Endothelial cell of umbilical vein (primary cell): ENCODE measurements at regions of chr3 and their contacts with region 1.

Region 1: GRCh38 chr3:132416807-132417694 is at the start of gene DNAJC13:
- DNase-seq: peak; percentile 96
- H3K4me3 ChIP-seq: peak within 1 kb of the TSS; percentile 87 to 100 (median 89)
- H3K27ac ChIP-seq: peak within 1 kb of the TSS; percentile 59
- H3K4me1 ChIP-seq: peaks cover 20% of the 10 kb centered on the region
- H3K27me3 ChIP-seq: no peaks in the 10 kb centered on the region
- CTCF ChIP-seq: no peak
- POLR2A ChIP-seq: no peak
- total RNA-seq, gene DNAJC13: 64.0 and 71.7 TPM in 2 replicates

Region 2: GRCh38 chr3:132135628-132136333 is 281.3 kb before region 1 on chr3:
- CTCF ChIA-PET with region 1: no interaction called
- POLR2A ChIA-PET with region 1: no interaction called
- dilution Hi-C with region 1: no loop called
- intact Hi-C with region 1: loop called (anchors 10 kb)
- DNase-seq: peak; percentile 75
- H3K4me3 ChIP-seq: no peak overlapping the region
- H3K27ac ChIP-seq: peak overlapping the region; percentile 92
- H3K4me1 ChIP-seq: peaks cover 26% of the 10 kb centered on the region
- H3K27me3 ChIP-seq: peaks cover 0 to 2% of the 10 kb centered on the region in 2 experiments
- CTCF ChIP-seq: no peak
- POLR2A ChIP-seq: no peak

Region 3: DNA sequence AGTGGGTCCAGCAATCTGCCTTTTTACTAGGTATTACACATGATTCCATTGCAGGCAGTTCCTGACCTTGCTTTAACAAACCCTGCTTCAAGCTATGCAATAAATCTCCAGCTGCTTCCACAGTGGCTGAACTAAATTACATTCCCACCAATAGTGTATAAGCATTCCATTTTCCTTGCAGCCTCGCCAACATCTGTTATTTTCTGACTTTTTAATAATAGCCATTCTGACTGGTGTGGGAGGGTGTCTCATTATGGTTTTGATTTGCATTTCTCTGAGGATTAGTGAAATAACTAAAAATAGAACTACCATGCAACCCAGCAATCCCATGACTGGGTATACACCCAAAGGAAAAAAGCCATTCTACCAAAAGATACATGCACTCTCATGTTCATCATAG is 36.1 kb before region 1 on chr3:
- CTCF ChIA-PET with region 1: no interaction called
- POLR2A ChIA-PET with region 1: no interaction called
- dilution Hi-C with region 1: no loop called
- intact Hi-C with region 1: no loop called
- DNase-seq: no peak
- H3K4me3 ChIP-seq: no peak overlapping the region
- H3K27ac ChIP-seq: no peak overlapping the region
- H3K4me1 ChIP-seq: no peaks in the 10 kb centered on the region
- H3K27me3 ChIP-seq: peaks cover 1 to 7% of the 10 kb centered on the region in 2 experiments
- CTCF ChIP-seq: no peak
- POLR2A ChIP-seq: no peak

Region 4: GRCh38 chr3:132432639-132433038 is 15.6 kb after region 1 on chr3:
- CTCF ChIA-PET with region 1: interaction called, 6 read pairs
- POLR2A ChIA-PET with region 1: no interaction called
- dilution Hi-C with region 1: no loop called
- intact Hi-C with region 1: loop called (anchors 1 kb)
- DNase-seq: peak; percentile 82
- H3K4me3 ChIP-seq: no peak overlapping the region
- H3K27ac ChIP-seq: peak overlapping the region; percentile 44
- H3K4me1 ChIP-seq: peaks cover 21% of the 10 kb centered on the region
- H3K27me3 ChIP-seq: no peaks in the 10 kb centered on the region
- CTCF ChIP-seq: no peak
- POLR2A ChIP-seq: no peak

Region 5: DNA sequence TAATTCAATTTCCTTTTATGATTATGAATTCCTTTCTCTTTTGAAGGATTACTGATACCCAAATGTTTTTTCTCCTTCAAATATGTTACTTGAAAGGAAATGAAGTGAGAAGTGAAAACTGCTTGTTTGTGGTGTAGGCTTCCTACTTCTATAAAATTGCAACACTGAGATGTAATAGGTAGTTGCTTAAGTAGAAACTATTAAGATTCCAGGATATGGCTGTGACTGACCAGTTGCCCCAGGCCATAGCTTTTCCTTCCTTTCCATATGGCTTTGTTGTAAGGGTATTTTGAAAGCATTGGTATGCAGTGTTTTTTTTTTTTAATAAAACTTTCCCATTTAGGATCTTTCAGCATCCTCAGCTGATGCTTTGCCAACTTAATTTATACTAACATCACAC is 28.8 kb after region 1 on chr3:
- CTCF ChIA-PET with region 1: interaction called, 3 read pairs
- POLR2A ChIA-PET with region 1: no interaction called
- dilution Hi-C with region 1: no loop called
- intact Hi-C with region 1: loop called (anchors 2 kb)
- DNase-seq: peak; percentile 78
- H3K4me3 ChIP-seq: no peak overlapping the region
- H3K27ac ChIP-seq: no peak overlapping the region
- H3K4me1 ChIP-seq: peaks cover 16% of the 10 kb centered on the region
- H3K27me3 ChIP-seq: no peaks in the 10 kb centered on the region
- CTCF ChIP-seq: no peak
- POLR2A ChIP-seq: no peak

Region 6: GRCh38 chr3:132522353-132522752 is 105.3 kb after region 1 on chr3:
- CTCF ChIA-PET with region 1: no interaction called
- POLR2A ChIA-PET with region 1: no interaction called
- dilution Hi-C with region 1: no loop called
- intact Hi-C with region 1: no loop called
- DNase-seq: no peak
- H3K4me3 ChIP-seq: no peak overlapping the region
- H3K27ac ChIP-seq: no peak overlapping the region
- H3K4me1 ChIP-seq: no peaks in the 10 kb centered on the region
- H3K27me3 ChIP-seq: no peaks in the 10 kb centered on the region
- CTCF ChIP-seq: no peak
- POLR2A ChIP-seq: no peak

Region 7: DNA sequence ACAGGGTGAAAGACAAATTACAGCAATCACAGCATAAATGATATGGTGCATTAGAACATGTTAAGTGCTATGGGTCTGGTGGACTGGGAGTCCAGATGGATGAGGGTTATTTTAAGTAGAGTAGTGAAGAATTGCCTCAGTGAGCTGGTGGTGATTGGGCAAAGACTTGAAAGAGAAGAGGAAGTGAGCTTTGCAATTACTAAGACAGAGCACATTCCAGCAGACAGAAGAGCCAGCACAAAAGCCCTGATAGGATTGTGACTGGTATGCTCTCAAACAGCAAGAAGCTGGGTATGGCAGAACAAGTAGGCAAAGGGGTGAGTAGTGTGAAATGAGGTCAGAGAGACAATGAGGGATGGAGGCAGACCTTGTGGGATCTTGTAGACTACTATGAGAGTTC is 178.0 kb after region 1 on chr3:
- CTCF ChIA-PET with region 1: no interaction called
- POLR2A ChIA-PET with region 1: no interaction called
- dilution Hi-C with region 1: no loop called
- intact Hi-C with region 1: no loop called
- DNase-seq: peak; percentile 65
- H3K4me3 ChIP-seq: no peak overlapping the region
- H3K27ac ChIP-seq: peak overlapping the region; percentile 90
- H3K4me1 ChIP-seq: peaks cover 40% of the 10 kb centered on the region
- H3K27me3 ChIP-seq: no peaks in the 10 kb centered on the region
- CTCF ChIP-seq: no peak
- POLR2A ChIP-seq: no peak

Region 8: GRCh38 chr3:132659365-132660051 is 242.5 kb after region 1 on chr3 and contains the start of gene ACAD11:
- CTCF ChIA-PET with region 1: no interaction called
- POLR2A ChIA-PET with region 1: no interaction called
- dilution Hi-C with region 1: no loop called
- intact Hi-C with region 1: loop called (anchors 5 kb)
- DNase-seq: peak; percentile 85
- H3K4me3 ChIP-seq: peak within 1 kb of the TSS; percentile 43 to 71 (median 70)
- H3K27ac ChIP-seq: peak within 1 kb of the TSS; percentile 68
- H3K4me1 ChIP-seq: peaks cover 28% of the 10 kb centered on the region
- H3K27me3 ChIP-seq: no peaks in the 10 kb centered on the region
- CTCF ChIP-seq: peak; percentile 66 to 70
- POLR2A ChIP-seq: no peak
- total RNA-seq, gene ACAD11: 9.6 and 15.2 TPM in 2 replicates

Region 9: DNA sequence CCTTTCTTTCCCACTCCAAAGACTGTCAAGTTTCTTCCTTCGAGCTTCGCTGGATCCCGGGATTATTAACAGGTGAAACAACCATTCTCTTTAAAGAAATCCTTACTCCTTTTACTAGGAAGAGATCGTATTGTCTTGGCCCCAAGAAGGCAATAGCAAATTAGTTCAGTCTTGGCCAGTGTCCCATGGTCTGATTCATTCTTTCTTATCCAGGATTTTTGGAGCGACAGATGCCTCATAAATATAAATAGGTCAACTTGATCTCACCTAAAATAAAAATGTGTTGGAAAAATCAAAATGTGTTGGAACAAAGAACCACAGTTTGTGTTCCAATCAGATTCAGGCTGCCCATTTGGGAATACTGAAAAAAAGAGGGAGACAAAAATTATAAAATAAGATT is 481.1 kb after region 1 on chr3:
- CTCF ChIA-PET with region 1: no interaction called
- POLR2A ChIA-PET with region 1: no interaction called
- dilution Hi-C with region 1: no loop called
- intact Hi-C with region 1: no loop called
- DNase-seq: no peak
- H3K4me3 ChIP-seq: no peak overlapping the region
- H3K27ac ChIP-seq: no peak overlapping the region
- H3K4me1 ChIP-seq: no peaks in the 10 kb centered on the region
- H3K27me3 ChIP-seq: no peaks in the 10 kb centered on the region
- CTCF ChIP-seq: no peak
- POLR2A ChIP-seq: no peak